Mammary epithelial cell (primary cell): ENCODE measurements at regions of chr19 and their contacts with region 1.

Region 1: DNA sequence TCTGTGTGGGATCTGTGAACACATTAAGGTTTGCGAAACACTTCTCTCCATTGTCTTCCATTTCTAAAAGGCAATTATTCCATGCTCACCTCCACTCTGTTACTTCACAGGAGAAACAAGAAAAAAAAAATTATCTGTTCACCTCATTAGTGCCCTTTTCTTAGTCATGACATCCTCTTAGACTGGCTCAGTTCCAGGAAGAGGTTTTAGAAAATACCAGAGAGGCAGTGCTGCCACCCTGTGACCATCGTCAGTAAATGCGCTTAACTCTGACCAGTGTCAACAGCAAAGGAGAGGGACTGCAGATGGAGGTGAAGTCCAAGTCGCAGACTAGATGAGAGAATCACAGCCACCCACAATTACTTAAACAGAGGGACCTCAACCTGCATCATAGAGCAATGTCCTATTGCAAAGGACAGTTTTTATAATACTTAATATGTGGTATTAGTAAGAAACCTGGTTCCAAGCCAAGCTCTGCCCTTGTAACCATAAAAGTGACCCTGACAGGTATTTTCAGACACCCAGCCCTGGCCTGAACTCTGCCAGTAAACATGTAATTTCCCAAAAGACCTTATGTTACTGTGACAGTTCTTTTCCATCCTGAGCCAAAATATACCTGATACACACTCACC is 19.4 kb downstream of the CEACAM21 start:
- DNase-seq: peak; percentile 72
- H3K4me3 ChIP-seq: no peak overlapping the region
- H3K27ac ChIP-seq: no peak overlapping the region
- H3K4me1 ChIP-seq: no peaks in the 10 kb centered on the region
- H3K27me3 ChIP-seq: no peaks in the 10 kb centered on the region
- CTCF ChIP-seq: peak; percentile 72 to 77

Region 2: GRCh38 chr19:41541990-41542584 is 53.3 kb before region 1 on chr19:
- CTCF ChIA-PET with region 1: no interaction called
- dilution Hi-C with region 1: no loop called
- in situ Hi-C with region 1: no loop called
- intact Hi-C with region 1: loop called (anchors 2 kb)
- DNase-seq: peak; percentile 14
- H3K4me3 ChIP-seq: no peak overlapping the region
- H3K27ac ChIP-seq: no peak overlapping the region
- H3K4me1 ChIP-seq: no peaks in the 10 kb centered on the region
- H3K27me3 ChIP-seq: peaks cover 3% of the 10 kb centered on the region
- CTCF ChIP-seq: peak; percentile 62 to 66

Region 3: GRCh38 chr19:41577144-41577830 is 18.1 kb before region 1 on chr19:
- CTCF ChIA-PET with region 1: no interaction called
- dilution Hi-C with region 1: no loop called
- in situ Hi-C with region 1: no loop called
- intact Hi-C with region 1: no loop called
- DNase-seq: no peak
- H3K4me3 ChIP-seq: no peak overlapping the region
- H3K27ac ChIP-seq: no peak overlapping the region
- H3K4me1 ChIP-seq: no peaks in the 10 kb centered on the region
- H3K27me3 ChIP-seq: peaks cover 2% of the 10 kb centered on the region
- CTCF ChIP-seq: no peak